ENCODE measurements at regions of chr13 and their contacts with region 1.

Region 1: DNA sequence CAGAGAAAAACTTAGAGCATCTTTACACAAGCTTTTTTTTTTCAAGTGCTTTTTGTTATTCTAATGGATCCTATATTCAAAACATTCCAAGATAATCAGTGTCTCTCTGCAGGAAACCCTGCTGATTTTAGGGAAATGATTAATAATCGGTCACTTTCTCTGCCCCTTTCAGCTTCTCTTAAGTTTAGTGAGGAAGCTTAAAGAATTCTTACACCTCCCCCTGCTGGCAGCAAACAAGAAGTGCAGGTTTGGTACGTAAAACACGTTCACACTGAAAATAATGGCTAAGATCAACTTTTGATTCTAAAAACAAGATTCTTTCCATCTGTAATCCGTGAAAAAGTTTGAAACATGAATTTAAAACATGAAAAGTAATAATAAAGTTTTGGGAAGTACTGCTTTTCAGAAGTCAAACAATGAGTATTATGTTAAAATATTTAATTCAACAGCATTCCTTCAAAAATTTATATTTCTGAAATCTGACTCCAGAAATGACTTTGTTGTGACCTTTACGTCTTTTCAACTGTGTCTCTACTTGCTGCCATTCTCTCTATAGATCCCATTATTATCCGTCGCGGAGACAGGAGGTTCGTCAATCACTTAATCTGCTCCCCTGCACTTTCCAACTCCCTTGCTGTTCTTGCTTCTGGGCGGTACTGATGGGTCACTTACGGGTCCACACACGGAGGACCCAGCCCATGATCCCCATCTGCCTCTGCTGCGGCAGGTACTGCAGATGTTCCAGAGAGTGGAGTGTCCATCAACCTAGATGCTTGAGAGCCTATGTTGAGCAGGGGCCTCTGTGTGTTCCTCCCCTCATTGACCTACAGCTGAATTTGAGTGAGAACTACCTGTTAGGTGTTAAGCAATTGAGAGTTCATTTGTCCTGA is 203.1 kb upstream of the EDNRB start:
- DNase-seq: peak in 4 of 5 donors; percentile 36 to 44 (median 39)
- H3K4me3 ChIP-seq: no peak overlapping the region
- H3K4me3 Mint-ChIP-seq: no peak overlapping the region
- H3K27ac ChIP-seq: no peak overlapping the region
- H3K27ac Mint-ChIP-seq: peak overlapping the region in 1 of 7 donors; percentile 48
- H3K4me1 ChIP-seq: no peaks in the 10 kb centered on the region
- H3K4me1 Mint-ChIP-seq: peaks cover 0 to 5% (median 3%) of the 10 kb centered on the region in 4 donors
- H3K27me3 ChIP-seq: no peaks in the 10 kb centered on the region
- H3K27me3 Mint-ChIP-seq: peaks cover 2 to 5% of the 10 kb centered on the region in 2 donors

Region 2: GRCh38 chr13:77492982-77493381 is 628.7 kb before region 1 on chr13:
- CTCF ChIA-PET with region 1: interaction called, 8 read pairs
- POLR2A ChIA-PET with region 1: no interaction called
- intact Hi-C with region 1: loop called (anchors 2 kb)
- DNase-seq: peak in 2 of 5 donors; percentile 5 to 7
- H3K4me3 ChIP-seq: no peak overlapping the region
- H3K4me3 Mint-ChIP-seq: no peak overlapping the region
- H3K27ac ChIP-seq: no peak overlapping the region
- H3K27ac Mint-ChIP-seq: no peak overlapping the region
- H3K4me1 ChIP-seq: no peaks in the 10 kb centered on the region
- H3K4me1 Mint-ChIP-seq: no peaks in the 10 kb centered on the region
- H3K27me3 ChIP-seq: no peaks in the 10 kb centered on the region
- H3K27me3 Mint-ChIP-seq: peaks cover 0 to 6% of the 10 kb centered on the region in 2 donors

Region 3: GRCh38 chr13:77599351-77599750 is 522.4 kb before region 1 on chr13:
- CTCF ChIA-PET with region 1: no interaction called
- POLR2A ChIA-PET with region 1: no interaction called
- intact Hi-C with region 1: loop called (anchors 5 kb)
- DNase-seq: no peak
- H3K4me3 ChIP-seq: no peak overlapping the region
- H3K4me3 Mint-ChIP-seq: no peak overlapping the region
- H3K27ac ChIP-seq: no peak overlapping the region
- H3K27ac Mint-ChIP-seq: no peak overlapping the region
- H3K4me1 ChIP-seq: no peaks in the 10 kb centered on the region
- H3K4me1 Mint-ChIP-seq: no peaks in the 10 kb centered on the region
- H3K27me3 ChIP-seq: no peaks in the 10 kb centered on the region
- H3K27me3 Mint-ChIP-seq: peaks cover 3 to 8% of the 10 kb centered on the region in 2 donors

Region 4: GRCh38 chr13:77776704-77777103 is 345.0 kb before region 1 on chr13:
- CTCF ChIA-PET with region 1: interaction called, 12 read pairs
- POLR2A ChIA-PET with region 1: no interaction called
- intact Hi-C with region 1: no loop called
- DNase-seq: no peak
- H3K4me3 ChIP-seq: no peak overlapping the region
- H3K4me3 Mint-ChIP-seq: no peak overlapping the region
- H3K27ac ChIP-seq: no peak overlapping the region
- H3K27ac Mint-ChIP-seq: no peak overlapping the region
- H3K4me1 ChIP-seq: peaks cover 6% of the 10 kb centered on the region
- H3K4me1 Mint-ChIP-seq: peaks cover 6 to 10% (median 8%) of the 10 kb centered on the region in 4 donors
- H3K27me3 ChIP-seq: no peaks in the 10 kb centered on the region
- H3K27me3 Mint-ChIP-seq: no peaks in the 10 kb centered on the region

Region 5: GRCh38 chr13:78131811-78132210 is 10.1 kb after region 1 on chr13:
- CTCF ChIA-PET with region 1: interaction called, 27 read pairs
- POLR2A ChIA-PET with region 1: no interaction called
- intact Hi-C with region 1: no loop called
- DNase-seq: no peak
- H3K4me3 ChIP-seq: no peak overlapping the region
- H3K4me3 Mint-ChIP-seq: no peak overlapping the region
- H3K27ac ChIP-seq: no peak overlapping the region
- H3K27ac Mint-ChIP-seq: no peak overlapping the region
- H3K4me1 ChIP-seq: no peaks in the 10 kb centered on the region
- H3K4me1 Mint-ChIP-seq: no peaks in the 10 kb centered on the region
- H3K27me3 ChIP-seq: no peaks in the 10 kb centered on the region
- H3K27me3 Mint-ChIP-seq: peaks cover 2 to 7% of the 10 kb centered on the region in 2 donors

Region 6: GRCh38 chr13:78137404-78138142 is 15.9 kb after region 1 on chr13:
- CTCF ChIA-PET with region 1: interaction called, 27 read pairs
- POLR2A ChIA-PET with region 1: no interaction called
- intact Hi-C with region 1: no loop called
- DNase-seq: peak in 4 of 5 donors; percentile 27 to 41 (median 30)
- H3K4me3 ChIP-seq: no peak overlapping the region
- H3K4me3 Mint-ChIP-seq: peak overlapping the region in 6 of 8 donors; percentile 20 to 71 (median 62)
- H3K27ac ChIP-seq: no peak overlapping the region
- H3K27ac Mint-ChIP-seq: peak overlapping the region in 1 of 7 donors; percentile 34
- H3K4me1 ChIP-seq: peaks cover 5% of the 10 kb centered on the region
- H3K4me1 Mint-ChIP-seq: peaks cover 4 to 6% (median 5%) of the 10 kb centered on the region in 4 donors
- H3K27me3 ChIP-seq: no peaks in the 10 kb centered on the region
- H3K27me3 Mint-ChIP-seq: peaks cover 0 to 3% of the 10 kb centered on the region in 2 donors